Cardiac septum (tissue), 1 donor: ENCODE measurements at regions of chr2 and their contacts with region 1.

Region 1: GRCh38 chr2:43333656-43334144 is 107.3 kb upstream of the ZFP36L2 start:
- DNase-seq: no peak

Region 2: GRCh38 chr2:43178602-43179542 is 154.8 kb before region 1 on chr2:
- intact Hi-C with region 1: no loop called
- DNase-seq: peak; percentile 88

Region 3: DNA sequence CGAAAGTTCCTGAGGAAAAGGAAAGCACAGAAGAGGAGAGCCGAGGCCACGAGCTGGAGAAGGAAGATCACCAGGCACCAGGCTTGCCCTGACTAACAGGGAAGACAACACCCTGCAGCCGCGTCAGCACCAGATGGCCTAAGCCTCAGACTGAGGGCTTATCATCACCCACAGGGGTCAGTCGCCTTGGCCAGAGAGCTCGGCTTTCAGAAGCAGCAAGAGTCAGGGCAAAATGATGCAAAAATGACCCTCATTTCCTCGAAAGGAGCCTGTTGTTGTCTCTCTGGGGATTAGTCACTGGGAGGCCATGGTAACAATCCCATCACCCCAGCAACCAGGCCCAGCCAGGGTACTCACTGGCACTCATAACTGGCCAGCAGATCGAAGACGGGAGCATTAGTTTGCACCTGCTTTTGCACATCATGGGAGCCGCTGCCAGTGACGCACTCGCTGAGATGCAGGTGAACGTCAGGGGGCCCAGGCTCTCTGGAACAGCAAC is 64.6 kb before region 1 on chr2:
- intact Hi-C with region 1: loop called (anchors 5 kb)
- DNase-seq: no peak

Region 4: GRCh38 chr2:43408407-43409160 is 74.9 kb after region 1 on chr2:
- intact Hi-C with region 1: loop called (anchors 5 kb)
- DNase-seq: no peak

Region 5: DNA sequence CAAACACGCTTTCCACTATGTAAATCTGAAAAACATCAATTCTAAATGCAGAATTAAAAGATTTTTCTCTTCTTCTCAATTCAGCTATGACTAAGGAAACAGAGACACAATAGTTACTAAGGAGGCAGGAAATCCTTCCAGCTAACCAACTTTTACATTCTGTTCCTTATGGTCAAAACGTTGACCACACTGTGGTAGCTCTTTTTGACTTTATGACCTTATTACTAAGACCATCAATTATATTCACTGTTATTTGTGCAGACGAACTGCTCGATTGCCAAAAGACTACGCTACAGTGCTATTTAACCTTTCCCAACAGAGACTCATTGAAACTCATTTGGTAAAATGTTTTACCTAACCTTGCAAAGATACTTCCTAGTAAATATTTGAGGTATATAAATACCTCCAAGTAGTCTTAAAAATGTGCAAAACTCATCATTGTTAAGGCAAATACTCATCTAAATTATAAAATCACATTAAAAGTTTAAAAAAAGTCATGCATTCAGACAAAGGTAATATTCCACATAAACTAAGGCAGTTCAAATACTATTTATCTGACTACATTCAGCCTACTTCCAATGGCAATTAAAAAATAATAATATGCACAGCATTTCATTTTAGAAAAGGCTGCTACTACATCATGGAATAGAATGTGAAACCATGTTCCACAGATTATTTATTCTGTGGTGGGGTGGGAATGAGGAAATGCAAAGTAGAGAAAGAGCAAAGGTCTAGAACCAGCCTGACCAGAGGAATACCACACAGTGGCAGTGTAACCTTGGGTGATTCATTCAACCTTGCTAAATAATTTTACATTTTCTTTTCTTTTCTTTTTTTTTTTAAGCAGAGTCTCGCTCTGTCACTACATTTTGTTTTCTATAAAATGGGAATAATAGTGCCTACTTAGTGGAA is 122.3 kb after region 1 on chr2:
- intact Hi-C with region 1: no loop called
- DNase-seq: no peak